GM18951 (cell line): ENCODE measurements at regions of chr16 and their contacts with region 1.

Region 1: DNA sequence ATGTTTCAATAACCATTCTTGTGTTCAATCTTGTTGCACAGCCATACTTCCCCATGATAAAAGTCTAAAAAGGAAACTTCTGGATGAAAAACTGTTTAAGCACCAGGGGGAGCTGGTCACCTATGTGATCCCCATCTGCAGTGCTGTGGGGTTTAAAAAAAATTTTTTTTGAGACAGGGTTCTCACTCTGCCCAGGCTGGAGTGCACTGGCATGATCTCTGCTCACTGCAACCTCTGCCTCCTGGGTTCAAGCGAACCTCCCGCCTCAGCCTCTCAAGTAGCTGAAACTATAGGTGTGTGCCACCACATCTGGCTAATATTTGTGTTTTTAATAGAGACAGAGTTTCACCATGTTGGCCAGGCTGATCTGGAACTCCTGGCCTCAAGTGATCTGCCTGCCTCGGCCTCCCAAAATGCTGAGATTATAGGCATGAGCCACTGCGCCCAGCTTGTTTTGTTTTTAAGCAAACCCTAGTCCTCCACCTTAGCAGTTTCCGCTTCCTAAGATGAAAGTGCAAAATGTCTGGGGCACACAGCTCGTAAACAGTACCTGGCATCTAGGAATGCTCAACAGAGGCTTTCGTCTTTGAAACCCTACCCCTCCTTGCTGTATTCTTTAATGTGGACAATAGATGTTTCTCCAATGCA is 25.4 kb downstream of the DNAJA2 start:
- POLR2A ChIP-seq: no peak

Region 2: DNA sequence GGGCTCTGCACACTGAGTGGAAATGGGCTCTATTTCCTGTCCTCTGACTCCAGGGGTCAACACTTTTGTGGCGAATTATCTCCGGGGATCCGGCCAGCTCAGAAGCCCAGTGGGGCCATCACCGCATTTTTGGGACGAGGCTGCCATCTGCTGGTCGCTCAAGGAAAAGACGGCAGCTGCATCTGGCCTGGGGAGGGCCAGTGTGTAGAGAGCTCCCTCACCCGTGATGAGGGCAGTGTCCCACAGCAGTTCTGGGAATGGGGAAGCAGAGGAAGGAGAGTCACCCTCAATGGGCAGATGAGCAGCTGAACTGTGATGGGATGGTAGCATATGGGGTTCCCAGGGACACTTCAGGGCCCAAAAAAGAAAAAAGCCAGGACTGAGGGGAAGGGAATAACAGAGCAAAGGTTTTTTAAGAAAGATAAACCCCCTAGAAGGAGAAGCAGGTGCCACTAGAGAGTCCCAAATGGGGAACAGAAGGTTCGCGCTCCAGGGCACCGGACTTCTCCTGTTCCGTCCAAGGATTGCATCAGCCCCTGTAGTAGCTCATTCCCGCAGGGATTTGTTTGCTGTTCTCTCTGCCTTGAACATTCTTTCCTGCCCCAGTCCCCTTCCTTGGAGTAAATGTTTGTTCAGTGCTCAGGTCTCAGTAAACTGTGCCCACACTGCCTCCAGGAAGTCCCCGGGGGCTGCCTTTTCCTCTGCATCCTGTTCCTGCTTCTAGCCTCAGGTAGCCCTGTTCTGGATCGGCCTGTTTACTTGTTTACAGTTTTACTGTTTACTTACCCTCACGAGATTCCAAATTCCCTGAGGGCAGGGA is 1217.1 kb after region 1 on chr16:
- in situ Hi-C with region 1: loop called (anchors 10 kb)
- POLR2A ChIP-seq: no peak